ENCODE measurements at regions of chr11 and their contacts with region 1.

Region 1: DNA sequence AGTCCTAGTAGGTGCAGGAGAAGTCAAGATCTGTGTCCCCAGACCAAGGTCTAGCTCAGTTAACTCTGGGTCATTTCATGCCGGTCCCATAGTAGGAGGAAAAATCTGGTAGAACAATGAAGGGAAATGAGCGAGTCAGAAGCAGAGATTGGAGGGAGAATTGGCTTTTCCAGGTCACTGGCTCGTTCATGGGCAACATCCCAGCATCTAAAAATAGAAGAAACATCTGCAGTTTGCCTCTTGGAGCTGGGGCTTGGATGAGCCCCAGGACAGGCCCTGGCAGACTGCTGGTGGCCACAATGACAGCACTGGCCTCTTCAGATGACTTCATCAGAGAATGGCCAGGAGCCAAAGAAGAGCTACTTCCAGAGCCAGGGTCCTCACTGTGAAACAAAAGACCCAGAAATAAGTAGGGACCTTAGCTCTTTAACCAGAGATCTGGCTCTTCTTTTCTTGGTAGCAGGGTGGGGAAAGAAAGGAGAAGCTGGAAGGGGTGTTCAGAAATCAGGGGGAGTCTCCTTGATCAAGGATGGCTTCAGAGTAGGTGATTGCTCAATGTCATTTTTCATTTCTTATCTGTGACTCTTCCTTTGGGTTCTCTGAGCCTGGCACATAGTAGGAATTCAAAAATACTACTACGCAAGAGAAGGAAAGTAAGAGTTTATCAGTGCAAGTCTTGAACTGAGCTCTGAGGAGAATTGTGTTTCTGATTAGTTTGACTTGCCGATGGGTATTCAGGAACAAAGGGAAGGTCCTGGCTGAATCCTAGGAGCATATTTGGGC is 102.6 kb downstream of the TMPRSS5 start:
- DNase-seq: no peak
- ATAC-seq: no peak
- H3K4me3 ChIP-seq: no peak overlapping the region
- H3K27ac ChIP-seq: no peak overlapping the region
- H3K4me1 ChIP-seq: no peaks in the 10 kb centered on the region
- H3K27me3 ChIP-seq: no peaks in the 10 kb centered on the region
- CTCF ChIP-seq: no peak
- EP300 ChIP-seq: no peak
- POLR2A ChIP-seq: no peak
- RAD21 ChIP-seq: no peak

Region 2: GRCh38 chr11:113532697-113533424 is 70.6 kb before region 1 on chr11:
- CTCF ChIA-PET with region 1: no interaction called
- POLR2A ChIA-PET with region 1: no interaction called
- in situ Hi-C with region 1: no loop called
- intact Hi-C with region 1: no loop called
- DNase-seq: peak; percentile 65 to 79 (median 70)
- ATAC-seq: peak; percentile 93
- H3K4me3 ChIP-seq: no peak overlapping the region
- H3K27ac ChIP-seq: no peak overlapping the region
- H3K4me1 ChIP-seq: no peaks in the 10 kb centered on the region; a peak in 1 of 5 replicates
- H3K27me3 ChIP-seq: peaks cover 7 to 12% of the 10 kb centered on the region in 2 experiments; a peak in 4 of 5 replicates
- CTCF ChIP-seq: peak; percentile 79 to 87 (median 84)
- EP300 ChIP-seq: no peak
- POLR2A ChIP-seq: no peak
- RAD21 ChIP-seq: peak; percentile 73 to 79

Region 3: GRCh38 chr11:113613619-113614018 is 10.2 kb after region 1 on chr11:
- CTCF ChIA-PET with region 1: no interaction called
- POLR2A ChIA-PET with region 1: interaction called, 10 read pairs
- in situ Hi-C with region 1: no loop called
- intact Hi-C with region 1: no loop called
- DNase-seq: peak in 2 of 4 experiments; percentile 37 to 73
- ATAC-seq: peak; percentile 81
- H3K4me3 ChIP-seq: no peak overlapping the region
- H3K27ac ChIP-seq: peak overlapping the region; percentile 72
- H3K4me1 ChIP-seq: peaks cover 0 to 22% of the 10 kb centered on the region in 2 experiments; a peak in 4 of 5 replicates
- H3K27me3 ChIP-seq: no peaks in the 10 kb centered on the region
- CTCF ChIP-seq: no peak
- EP300 ChIP-seq: peak; percentile 31
- POLR2A ChIP-seq: no peak
- RAD21 ChIP-seq: no peak

Region 4: GRCh38 chr11:113862435-113862834 is 259.0 kb after region 1 on chr11:
- CTCF ChIA-PET with region 1: no interaction called
- POLR2A ChIA-PET with region 1: no interaction called
- in situ Hi-C with region 1: no loop called
- intact Hi-C with region 1: no loop called
- DNase-seq: no peak
- ATAC-seq: no peak
- H3K4me3 ChIP-seq: no peak overlapping the region
- H3K27ac ChIP-seq: no peak overlapping the region
- H3K4me1 ChIP-seq: no peaks in the 10 kb centered on the region
- H3K27me3 ChIP-seq: no peaks in the 10 kb centered on the region
- CTCF ChIP-seq: no peak
- EP300 ChIP-seq: no peak
- POLR2A ChIP-seq: no peak
- RAD21 ChIP-seq: no peak

Measured in K562 (cell line).